Heart left ventricle (tissue), 16 donors: ENCODE measurements at regions of chr2 and their contacts with region 1.

Region 1: DNA sequence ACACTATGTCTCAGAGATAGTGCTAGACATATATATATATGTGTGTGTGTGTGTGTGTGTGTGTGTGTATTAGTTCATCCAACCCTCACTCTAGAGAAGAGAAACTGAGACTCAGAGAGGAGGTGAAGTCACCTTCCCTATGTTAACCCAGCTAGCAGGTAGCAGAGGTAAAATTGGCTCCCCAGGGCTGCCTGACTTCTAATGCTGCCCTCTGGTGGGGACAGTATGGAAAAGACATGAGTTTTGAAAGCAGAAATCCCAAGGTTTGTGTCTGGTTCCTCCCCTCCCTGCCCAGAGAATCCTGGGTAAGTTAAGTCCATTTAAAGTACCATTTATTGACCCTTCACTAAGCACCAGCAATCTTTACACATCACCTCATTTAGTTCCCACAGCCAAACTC is 137.7 kb downstream of the THNSL2 start:
- DNase-seq: no peak
- ATAC-seq: peak in 1 of 4 donors; percentile 13
- H3K4me3 ChIP-seq: no peak overlapping the region
- H3K27ac ChIP-seq: no peak overlapping the region
- H3K4me1 ChIP-seq: no peaks in the 10 kb centered on the region
- H3K27me3 ChIP-seq: no peaks in the 10 kb centered on the region
- CTCF ChIP-seq: peak in 11 of 12 donors; percentile 11 to 51 (median 32)
- POLR2A ChIP-seq: no peak

Region 2: GRCh38 chr2:88190808-88191721 is 116.8 kb before region 1 on chr2:
- intact Hi-C with region 1: loop called (anchors 2 to 10 kb)
- DNase-seq: no peak
- ATAC-seq: peak in 3 of 4 donors; percentile 37 to 53 (median 40)
- H3K4me3 ChIP-seq: no peak overlapping the region
- H3K27ac ChIP-seq: no peak overlapping the region
- H3K4me1 ChIP-seq: peaks cover 0 to 8% (median 0%) of the 10 kb centered on the region in 12 donors
- H3K27me3 ChIP-seq: peaks cover 0 to 3% (median 0%) of the 10 kb centered on the region in 9 donors
- CTCF ChIP-seq: peak; percentile 43 to 71 (median 58)
- POLR2A ChIP-seq: no peak

Region 3: DNA sequence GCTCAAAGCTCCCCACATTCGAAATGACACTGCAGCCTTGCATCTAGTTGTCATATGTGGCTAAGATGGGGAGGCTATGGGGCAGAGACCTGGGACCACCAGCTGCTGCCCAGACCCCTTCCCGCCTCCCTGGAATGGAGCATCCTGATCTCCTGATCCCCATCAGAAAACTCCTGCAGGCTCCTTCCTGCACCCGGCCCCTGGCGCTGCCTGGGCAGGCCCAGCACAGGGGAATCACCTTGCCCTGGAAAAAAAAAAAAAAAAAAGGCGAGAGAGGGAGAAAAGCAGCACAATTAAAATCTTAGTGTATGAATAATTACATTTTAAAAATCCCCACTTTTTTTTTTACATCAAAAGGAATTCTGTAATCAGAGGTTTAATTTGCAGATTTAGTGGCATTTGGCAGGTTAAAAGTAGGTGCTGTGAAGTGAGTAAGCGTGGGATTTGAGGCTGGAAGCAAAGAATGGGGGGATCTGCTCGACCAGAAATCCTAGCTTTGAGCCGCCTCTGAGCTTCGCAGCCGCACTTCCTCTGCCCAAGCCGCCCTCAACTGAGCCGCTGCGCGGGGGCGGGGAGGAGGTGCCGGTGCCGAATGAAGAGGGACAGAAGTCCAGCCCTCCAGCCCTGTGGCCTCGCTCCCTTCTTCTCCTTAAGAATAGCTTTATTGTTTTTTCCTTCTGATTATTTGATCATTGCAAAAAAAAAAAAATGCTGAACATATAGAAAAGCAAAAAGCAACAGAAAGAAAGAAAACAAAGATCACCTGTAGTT is 107.7 kb before region 1 on chr2:
- intact Hi-C with region 1: loop called in 2 of 10 experiments (anchors 5 to 10 kb)
- DNase-seq: peak in 3 of 5 donors; percentile 27 to 43 (median 39)
- ATAC-seq: peak in 3 of 4 donors; percentile 57 to 73 (median 61)
- H3K4me3 ChIP-seq: peak overlapping the region in 3 of 12 donors; percentile 15 to 18 (median 17)
- H3K27ac ChIP-seq: no peak overlapping the region
- H3K4me1 ChIP-seq: peaks cover 0 to 12% (median 6%) of the 10 kb centered on the region in 12 donors
- H3K27me3 ChIP-seq: peaks cover 0 to 61% (median 26%) of the 10 kb centered on the region in 9 donors
- CTCF ChIP-seq: no peak
- POLR2A ChIP-seq: no peak